Activated CD4-positive, alpha-beta T cell treated with anti-CD3 and anti-CD28 coated beads for 36 hours (primary cell): ENCODE measurements at regions of chr6 and their contacts with region 1.

Region 1: DNA sequence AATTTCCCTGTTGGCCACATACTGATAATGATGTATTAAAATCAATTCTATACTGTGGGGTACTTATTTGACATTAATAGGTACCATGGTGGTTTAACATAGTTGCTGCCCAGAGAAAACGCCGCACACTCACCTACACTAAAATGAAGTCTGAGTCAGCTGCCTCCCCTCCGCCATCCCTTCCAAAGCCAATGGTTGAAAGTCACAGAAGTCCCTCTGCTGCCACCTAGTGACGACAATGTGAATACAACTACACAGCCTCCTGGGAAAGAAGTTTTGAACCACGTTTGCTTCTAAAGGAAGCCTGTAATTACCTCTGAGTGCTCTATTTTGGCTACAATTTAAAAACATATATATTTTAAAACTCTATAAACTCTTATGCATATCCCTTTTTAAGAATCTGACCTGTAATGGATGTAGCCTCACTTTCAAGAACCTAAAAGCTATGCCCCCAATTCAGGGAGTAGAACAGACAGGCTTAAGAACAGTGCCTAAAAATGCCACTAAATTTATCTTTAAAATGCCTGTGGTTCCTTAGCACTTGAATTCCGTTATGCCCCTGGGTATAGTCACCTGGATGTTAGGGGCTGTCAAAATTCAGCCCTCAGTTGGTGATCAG is 20.6 kb upstream of the ECI2 start:
- DNase-seq: peak; percentile 88
- ATAC-seq: peak; percentile 99
- H3K4me3 Mint-ChIP-seq: no peak overlapping the region
- H3K27ac Mint-ChIP-seq: no peak overlapping the region
- H3K4me1 Mint-ChIP-seq: peaks cover 7% of the 10 kb centered on the region
- H3K27me3 Mint-ChIP-seq: no peaks in the 10 kb centered on the region

Region 2: GRCh38 chr6:4085332-4085700 is 70.6 kb before region 1 on chr6:
- CTCF ChIA-PET with region 1: no interaction called
- POLR2A ChIA-PET with region 1: no interaction called
- intact Hi-C with region 1: no loop called
- DNase-seq: no peak
- ATAC-seq: no peak
- H3K4me3 Mint-ChIP-seq: no peak overlapping the region
- H3K27ac Mint-ChIP-seq: no peak overlapping the region
- H3K4me1 Mint-ChIP-seq: no peaks in the 10 kb centered on the region
- H3K27me3 Mint-ChIP-seq: no peaks in the 10 kb centered on the region

Region 3: DNA sequence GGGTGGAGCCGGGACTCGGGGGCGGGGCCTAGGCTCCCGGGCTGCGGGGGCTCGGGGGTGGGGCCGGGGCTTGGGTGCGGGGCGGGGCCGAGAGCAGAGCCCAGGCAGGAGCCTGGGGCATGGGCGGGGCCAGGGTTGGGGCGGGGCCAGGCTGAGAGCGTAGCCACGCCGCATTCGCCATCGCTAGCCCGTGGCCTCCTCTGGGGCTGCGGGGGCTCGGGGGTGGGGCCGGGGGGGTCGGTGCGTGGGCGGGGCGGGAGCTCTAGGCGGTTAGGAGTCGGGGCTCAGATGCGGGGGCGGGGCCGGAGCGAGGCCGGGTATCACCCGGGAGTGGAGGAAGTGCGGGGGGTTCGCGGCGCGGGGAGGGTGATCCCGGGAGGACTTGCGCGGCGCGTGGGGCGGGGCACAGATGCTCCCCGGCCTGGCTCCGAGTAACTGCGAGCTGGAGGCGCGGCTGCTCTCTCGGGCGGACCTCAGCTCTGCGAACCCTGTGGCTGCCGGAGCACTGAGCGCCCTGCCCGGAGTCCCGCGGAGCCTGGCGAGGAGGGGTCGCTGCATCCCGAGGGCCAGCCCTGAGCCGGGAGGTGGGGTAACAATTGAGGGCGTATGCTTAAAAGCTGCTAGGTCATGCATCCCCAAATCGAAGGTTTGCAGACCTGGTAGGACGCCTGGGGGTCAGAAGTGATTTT is 20.1 kb before region 1 on chr6:
- CTCF ChIA-PET with region 1: interaction called, 7 read pairs
- POLR2A ChIA-PET with region 1: interaction called, 3 read pairs
- intact Hi-C with region 1: loop called (anchors 1 kb)
- DNase-seq: peak; percentile 98
- ATAC-seq: peak; percentile 92
- H3K4me3 Mint-ChIP-seq: peak overlapping the region; percentile 79
- H3K27ac Mint-ChIP-seq: peak overlapping the region; percentile 85
- H3K4me1 Mint-ChIP-seq: peaks cover 46% of the 10 kb centered on the region
- H3K27me3 Mint-ChIP-seq: no peaks in the 10 kb centered on the region

Region 4: DNA sequence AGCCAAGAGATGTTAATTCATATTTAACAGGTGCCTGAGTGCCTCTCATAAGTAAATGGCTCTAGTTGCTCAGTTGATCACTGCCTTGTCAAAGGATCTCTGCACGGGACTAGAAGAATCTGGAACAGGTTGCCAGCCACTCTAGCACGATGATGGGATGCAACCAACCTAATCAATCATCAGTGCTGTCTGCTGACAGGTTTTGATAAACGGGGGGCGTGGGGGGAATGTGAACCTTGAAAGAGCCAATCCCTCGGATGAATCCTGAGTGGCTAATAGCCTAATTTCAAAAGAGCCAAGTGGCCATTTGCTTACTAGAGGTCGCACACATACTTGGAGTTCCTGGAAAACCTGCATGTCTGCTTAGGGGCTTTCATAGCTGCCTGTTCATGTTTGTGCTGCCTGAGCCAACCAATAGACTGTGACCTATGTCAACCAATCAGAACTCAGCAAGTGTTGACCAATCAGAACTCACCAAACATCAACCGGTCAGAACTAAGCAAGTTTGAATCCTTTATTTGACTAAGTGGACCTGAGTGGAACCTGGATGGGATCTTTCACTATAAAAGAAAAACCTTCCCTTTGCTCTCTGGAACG is 22.9 kb after region 1 on chr6:
- CTCF ChIA-PET with region 1: no interaction called
- POLR2A ChIA-PET with region 1: no interaction called
- intact Hi-C with region 1: no loop called
- DNase-seq: no peak
- ATAC-seq: no peak
- H3K4me3 Mint-ChIP-seq: no peak overlapping the region
- H3K27ac Mint-ChIP-seq: no peak overlapping the region
- H3K4me1 Mint-ChIP-seq: no peaks in the 10 kb centered on the region
- H3K27me3 Mint-ChIP-seq: peaks cover 9% of the 10 kb centered on the region

Region 5: DNA sequence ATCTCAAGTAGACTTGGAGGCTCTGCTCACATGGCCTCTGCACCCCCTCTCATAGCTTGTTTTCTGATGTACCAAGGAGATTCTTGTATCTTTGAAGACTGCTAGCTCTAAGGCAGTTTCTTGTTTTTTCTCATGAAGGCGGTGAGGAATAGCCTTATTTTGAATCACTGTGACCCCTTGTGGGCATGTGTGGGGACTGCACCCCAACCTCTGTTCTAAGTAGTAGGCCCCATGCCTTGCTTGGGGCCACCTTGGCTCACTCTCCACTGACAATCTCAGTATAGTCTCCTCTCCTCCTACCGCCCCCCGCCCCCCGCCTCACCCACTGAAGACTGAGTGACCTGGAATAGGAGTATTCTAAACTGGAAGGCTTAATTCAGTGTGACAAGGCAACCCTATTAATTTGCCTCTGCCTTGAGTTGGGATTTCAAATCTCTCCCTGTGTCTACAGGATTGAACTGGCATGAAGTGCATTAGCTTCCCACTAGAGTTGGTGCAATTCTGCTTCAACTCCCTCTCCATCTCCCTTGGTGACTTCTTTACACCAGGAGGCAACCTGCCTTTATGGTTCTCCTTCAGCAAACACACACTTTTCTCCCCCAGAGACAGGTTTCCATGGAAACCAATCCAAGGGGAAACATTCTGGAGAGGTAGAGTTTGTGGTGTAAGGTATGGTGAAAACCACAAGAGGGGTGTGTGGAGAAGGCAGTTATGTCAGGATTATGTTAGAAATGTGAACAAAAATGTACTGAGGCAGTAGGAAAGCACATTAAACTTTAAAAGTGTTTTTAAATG is 54.9 kb after region 1 on chr6:
- CTCF ChIA-PET with region 1: interaction called, 5 read pairs
- POLR2A ChIA-PET with region 1: no interaction called
- intact Hi-C with region 1: loop called in 1 of 2 experiments (anchors 2 kb)
- DNase-seq: peak; percentile 82
- ATAC-seq: peak; percentile 98
- H3K4me3 Mint-ChIP-seq: no peak overlapping the region
- H3K27ac Mint-ChIP-seq: no peak overlapping the region
- H3K4me1 Mint-ChIP-seq: peaks cover 15% of the 10 kb centered on the region
- H3K27me3 Mint-ChIP-seq: peaks cover 6% of the 10 kb centered on the region

Region 6: DNA sequence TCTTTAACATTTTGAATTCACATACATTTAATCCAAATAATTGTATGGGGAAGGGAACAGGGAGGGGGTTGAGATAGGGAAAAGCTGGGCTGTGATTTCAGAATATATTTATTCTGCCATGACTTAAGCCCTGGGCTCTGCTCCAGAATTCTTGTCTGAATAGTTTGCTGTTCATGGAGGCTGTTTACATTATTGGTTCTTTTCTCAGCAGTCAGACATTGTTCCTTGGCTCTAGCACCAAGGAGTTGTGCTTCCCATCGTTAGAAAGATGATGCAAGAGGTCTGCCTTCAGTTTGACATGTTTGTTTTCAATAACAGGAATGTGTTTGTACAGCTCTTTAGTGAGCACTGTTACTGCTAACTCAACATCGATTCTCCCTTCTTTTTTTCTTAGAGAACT is 421.4 kb after region 1 on chr6:
- CTCF ChIA-PET with region 1: no interaction called
- POLR2A ChIA-PET with region 1: no interaction called
- intact Hi-C with region 1: no loop called
- DNase-seq: no peak
- ATAC-seq: no peak
- H3K4me3 Mint-ChIP-seq: no peak overlapping the region
- H3K27ac Mint-ChIP-seq: no peak overlapping the region
- H3K4me1 Mint-ChIP-seq: no peaks in the 10 kb centered on the region
- H3K27me3 Mint-ChIP-seq: peaks cover 18% of the 10 kb centered on the region